ENCODE measurements at regions of chr10 and their contacts with region 1.

Region 1: GRCh38 chr10:95246579-95247051 is 44.2 kb downstream of the PDLIM1 start:
- DNase-seq: peak; percentile 88
- ATAC-seq: peak; percentile 85
- H3K4me3 ChIP-seq: no peak overlapping the region
- H3K4me3 Mint-ChIP-seq: no peak overlapping the region
- H3K27ac ChIP-seq: peak overlapping the region in 1 of 2 donors; percentile 0
- H3K27ac Mint-ChIP-seq: peak overlapping the region; percentile 59
- H3K4me1 ChIP-seq: peaks cover 7 to 14% of the 10 kb centered on the region in 2 donors
- H3K4me1 Mint-ChIP-seq: peaks cover 28% of the 10 kb centered on the region
- H3K27me3 ChIP-seq: no peaks in the 10 kb centered on the region
- H3K27me3 Mint-ChIP-seq: no peaks in the 10 kb centered on the region
- CTCF ChIP-seq: peak; percentile 89

Region 2: GRCh38 chr10:95183271-95184230 is 63.1 kb before region 1 on chr10:
- CTCF ChIA-PET with region 1: interaction called, 16 read pairs
- POLR2A ChIA-PET with region 1: no interaction called
- intact Hi-C with region 1: loop called (anchors 2 kb)
- DNase-seq: peak; percentile 89
- ATAC-seq: peak; percentile 97
- H3K4me3 ChIP-seq: peak overlapping the region; percentile 41 to 75 (median 55)
- H3K4me3 Mint-ChIP-seq: peak overlapping the region; percentile 87
- H3K27ac ChIP-seq: peak overlapping the region; percentile 25 to 79
- H3K27ac Mint-ChIP-seq: peak overlapping the region; percentile 82
- H3K4me1 ChIP-seq: peaks cover 0 to 7% of the 10 kb centered on the region in 2 donors
- H3K4me1 Mint-ChIP-seq: peaks cover 7% of the 10 kb centered on the region
- H3K27me3 ChIP-seq: no peaks in the 10 kb centered on the region
- H3K27me3 Mint-ChIP-seq: no peaks in the 10 kb centered on the region
- CTCF ChIP-seq: peak; percentile 97

Region 3: DNA sequence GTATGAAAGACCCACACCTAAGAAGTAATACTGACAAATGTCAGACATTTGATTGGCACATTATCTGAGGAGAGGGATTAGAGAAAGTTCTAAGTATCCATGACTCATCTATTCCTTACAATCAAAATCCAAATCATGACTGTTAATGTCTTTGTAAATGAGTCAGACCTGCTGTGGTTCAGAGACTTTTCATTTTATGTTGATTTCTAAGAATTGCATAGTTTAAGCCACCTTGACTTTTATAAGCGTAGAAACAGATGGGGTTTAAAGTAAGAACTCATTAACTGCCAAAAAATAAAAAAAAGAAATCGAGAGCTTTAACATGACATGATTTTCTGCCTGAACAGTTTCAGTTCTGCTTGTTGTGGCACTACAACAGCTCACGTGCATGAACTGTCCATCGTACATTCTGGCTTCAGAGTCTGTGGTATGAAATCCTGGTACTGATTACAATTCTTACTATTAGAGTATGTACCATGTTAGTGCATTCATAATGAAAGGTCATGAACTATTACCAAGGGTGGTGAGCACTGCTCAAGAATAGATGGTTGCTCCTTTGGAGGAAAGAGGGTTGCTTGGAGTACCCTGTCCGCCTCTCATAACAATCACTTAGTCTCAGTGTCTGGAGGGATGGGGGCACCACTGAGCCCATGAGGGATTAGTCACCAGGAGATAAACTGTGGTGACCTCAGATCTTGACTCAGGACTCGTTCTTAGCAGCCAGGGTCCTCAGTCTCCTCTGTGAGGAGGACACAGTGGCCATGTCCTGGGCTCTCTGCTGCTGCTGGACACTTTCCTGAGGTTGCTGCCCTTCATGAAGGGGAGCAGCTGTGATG is 10.3 kb before region 1 on chr10:
- CTCF ChIA-PET with region 1: interaction called, 34 read pairs
- POLR2A ChIA-PET with region 1: interaction called, 3 read pairs
- intact Hi-C with region 1: no loop called
- DNase-seq: peak; percentile 56
- ATAC-seq: peak; percentile 76
- H3K4me3 ChIP-seq: no peak overlapping the region
- H3K4me3 Mint-ChIP-seq: peak overlapping the region; percentile 39
- H3K27ac ChIP-seq: peak overlapping the region in 1 of 2 donors; percentile 50
- H3K27ac Mint-ChIP-seq: peak overlapping the region; percentile 42
- H3K4me1 ChIP-seq: peaks cover 11 to 15% of the 10 kb centered on the region in 2 donors
- H3K4me1 Mint-ChIP-seq: peaks cover 20% of the 10 kb centered on the region
- H3K27me3 ChIP-seq: no peaks in the 10 kb centered on the region
- H3K27me3 Mint-ChIP-seq: no peaks in the 10 kb centered on the region
- CTCF ChIP-seq: no peak

Region 4: GRCh38 chr10:95266674-95267095 is 20.1 kb after region 1 on chr10:
- CTCF ChIA-PET with region 1: interaction called, 20 read pairs
- POLR2A ChIA-PET with region 1: no interaction called
- intact Hi-C with region 1: no loop called
- DNase-seq: peak; percentile 88
- ATAC-seq: peak; percentile 77
- H3K4me3 ChIP-seq: peak overlapping the region in 1 of 5 experiments; percentile 30
- H3K4me3 Mint-ChIP-seq: peak overlapping the region; percentile 36
- H3K27ac ChIP-seq: peak overlapping the region; percentile 78 to 92
- H3K27ac Mint-ChIP-seq: peak overlapping the region; percentile 97
- H3K4me1 ChIP-seq: peaks cover 28 to 41% of the 10 kb centered on the region in 2 donors
- H3K4me1 Mint-ChIP-seq: peaks cover 53% of the 10 kb centered on the region
- H3K27me3 ChIP-seq: no peaks in the 10 kb centered on the region
- H3K27me3 Mint-ChIP-seq: no peaks in the 10 kb centered on the region
- CTCF ChIP-seq: no peak

Region 5: DNA sequence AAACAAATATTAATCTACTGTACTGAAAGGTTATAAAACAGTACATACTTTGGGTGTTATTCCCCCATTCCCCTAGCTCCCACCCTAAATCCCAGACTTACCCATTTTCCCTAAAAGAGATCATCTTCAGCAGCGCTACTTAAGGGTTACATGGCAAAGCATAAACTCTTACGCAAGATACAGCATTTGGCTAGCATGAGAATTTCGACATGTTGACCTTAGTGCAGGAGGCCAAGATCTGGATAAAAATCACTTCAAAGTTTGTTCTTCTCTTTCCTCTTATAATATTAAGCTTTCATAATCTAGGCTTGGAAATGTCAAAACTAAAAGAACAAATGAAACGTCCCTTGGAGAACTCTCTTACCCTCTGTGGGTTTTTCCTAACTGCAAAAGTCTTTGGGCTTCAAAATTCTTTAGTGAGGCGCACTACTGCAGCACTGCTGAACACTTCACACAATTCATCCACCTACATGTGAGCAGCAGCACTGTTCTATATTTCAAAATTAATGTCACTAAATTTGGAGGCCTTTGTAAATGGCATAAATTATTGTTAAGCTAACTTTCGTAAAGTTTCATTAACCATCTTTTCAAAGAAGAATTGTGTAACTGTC is 103.7 kb after region 1 on chr10:
- CTCF ChIA-PET with region 1: interaction called, 644 read pairs
- POLR2A ChIA-PET with region 1: no interaction called
- intact Hi-C with region 1: no loop called
- DNase-seq: no peak
- ATAC-seq: no peak
- H3K4me3 ChIP-seq: no peak overlapping the region
- H3K4me3 Mint-ChIP-seq: no peak overlapping the region
- H3K27ac ChIP-seq: no peak overlapping the region
- H3K27ac Mint-ChIP-seq: no peak overlapping the region
- H3K4me1 ChIP-seq: peaks cover 8 to 10% of the 10 kb centered on the region in 2 donors
- H3K4me1 Mint-ChIP-seq: peaks cover 12% of the 10 kb centered on the region
- H3K27me3 ChIP-seq: peaks cover 0 to 3% (median 0%) of the 10 kb centered on the region in 4 experiments
- H3K27me3 Mint-ChIP-seq: no peaks in the 10 kb centered on the region
- CTCF ChIP-seq: no peak